ENCODE measurements at regions of chr17 and their contacts with region 1.

Region 1: GRCh38 chr17:51166197-51166986 is at the start of gene NME2:
- DNase-seq: no peak
- H3K4me3 ChIP-seq: peak within 1 kb of the TSS; percentile 90
- H3K27me3 ChIP-seq: no peaks in the 10 kb centered on the region
- CTCF ChIP-seq: no peak
- polyA plus RNA-seq, gene NME2: 835 and 1,035 TPM in 2 replicates

Region 2: DNA sequence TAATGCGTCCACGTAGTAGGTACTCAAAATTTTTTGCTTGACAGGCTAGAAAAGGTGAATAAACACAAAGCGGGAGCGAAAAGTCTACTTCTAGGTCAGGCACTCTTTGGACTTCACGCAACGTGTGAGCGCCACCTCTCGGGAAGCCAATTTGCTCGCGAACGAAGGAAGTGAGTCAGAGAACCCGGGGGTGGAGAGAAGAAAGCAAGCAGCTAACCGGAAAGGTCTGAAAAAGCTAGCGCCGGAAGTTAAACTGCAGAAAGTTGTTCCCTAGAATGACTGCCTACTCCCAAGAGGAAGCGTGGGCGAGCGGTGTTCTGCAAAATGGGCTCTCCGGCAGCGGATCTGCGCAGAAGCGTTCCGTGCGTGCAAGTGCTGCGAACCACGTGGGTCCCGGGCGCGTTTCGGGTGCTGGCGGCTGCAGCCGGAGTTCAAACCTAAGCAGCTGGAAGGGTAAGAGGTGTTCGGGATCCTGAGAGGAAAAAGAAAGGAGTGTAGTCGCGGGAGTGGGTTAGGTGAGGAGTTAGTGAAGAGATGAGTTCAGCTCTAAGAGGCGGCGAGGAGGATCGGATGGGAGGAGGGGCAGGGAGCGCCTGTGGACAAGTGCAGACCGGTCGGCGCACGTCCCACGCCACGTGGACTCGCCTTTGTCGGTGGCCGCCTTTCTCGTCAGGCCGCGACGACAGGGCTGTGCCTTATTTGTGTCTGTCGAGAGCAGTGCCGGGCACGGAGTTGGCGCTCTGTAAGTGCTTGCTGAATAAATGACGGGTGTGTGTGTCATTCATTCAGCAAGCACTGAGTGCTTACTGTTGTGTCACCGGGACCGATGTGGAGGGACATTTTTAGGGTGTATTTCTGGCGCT is 13.0 kb before region 1 on chr17 and contains the start of gene NME1:
- CTCF ChIA-PET with region 1: interaction called, 12 read pairs
- POLR2A ChIA-PET with region 1: no interaction called
- DNase-seq: peak; percentile 97
- H3K4me3 ChIP-seq: peak within 1 kb of the TSS; percentile 80
- H3K27me3 ChIP-seq: no peaks in the 10 kb centered on the region
- CTCF ChIP-seq: peak; percentile 85
- polyA plus RNA-seq, gene NME1: 178 and 261 TPM in 2 replicates

Region 3: DNA sequence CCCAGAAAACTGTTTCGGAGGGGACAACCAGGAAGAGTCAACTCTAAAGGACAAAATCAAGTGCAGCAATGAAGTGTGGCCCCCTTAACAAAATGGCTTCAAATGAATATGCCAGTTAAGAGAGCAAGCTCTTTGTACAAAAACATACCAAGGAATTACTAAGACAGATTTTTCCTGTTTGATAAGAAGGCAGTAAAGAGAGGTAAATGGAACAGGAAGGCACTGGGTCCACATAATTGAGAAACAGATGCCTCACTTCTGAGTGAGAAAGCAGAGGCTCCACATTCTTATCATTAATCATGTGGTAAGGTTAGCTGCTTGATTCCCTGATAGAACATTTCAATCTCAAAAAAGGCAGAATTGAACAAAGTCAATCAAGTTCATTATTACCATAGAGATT is 48.5 kb after region 1 on chr17:
- CTCF ChIA-PET with region 1: no interaction called
- POLR2A ChIA-PET with region 1: no interaction called
- DNase-seq: no peak
- H3K4me3 ChIP-seq: no peak overlapping the region
- H3K27me3 ChIP-seq: no peaks in the 10 kb centered on the region
- CTCF ChIP-seq: no peak

Region 4: GRCh38 chr17:51260881-51261568 is 94.6 kb after region 1 on chr17:
- CTCF ChIA-PET with region 1: no interaction called
- POLR2A ChIA-PET with region 1: no interaction called
- DNase-seq: no peak
- H3K4me3 ChIP-seq: peak overlapping the region; percentile 92
- H3K27me3 ChIP-seq: no peaks in the 10 kb centered on the region
- CTCF ChIP-seq: no peak